Gastrocnemius medialis (tissue), 4 donors: ENCODE measurements at regions of chr11 and their contacts with region 1.

Region 1: DNA sequence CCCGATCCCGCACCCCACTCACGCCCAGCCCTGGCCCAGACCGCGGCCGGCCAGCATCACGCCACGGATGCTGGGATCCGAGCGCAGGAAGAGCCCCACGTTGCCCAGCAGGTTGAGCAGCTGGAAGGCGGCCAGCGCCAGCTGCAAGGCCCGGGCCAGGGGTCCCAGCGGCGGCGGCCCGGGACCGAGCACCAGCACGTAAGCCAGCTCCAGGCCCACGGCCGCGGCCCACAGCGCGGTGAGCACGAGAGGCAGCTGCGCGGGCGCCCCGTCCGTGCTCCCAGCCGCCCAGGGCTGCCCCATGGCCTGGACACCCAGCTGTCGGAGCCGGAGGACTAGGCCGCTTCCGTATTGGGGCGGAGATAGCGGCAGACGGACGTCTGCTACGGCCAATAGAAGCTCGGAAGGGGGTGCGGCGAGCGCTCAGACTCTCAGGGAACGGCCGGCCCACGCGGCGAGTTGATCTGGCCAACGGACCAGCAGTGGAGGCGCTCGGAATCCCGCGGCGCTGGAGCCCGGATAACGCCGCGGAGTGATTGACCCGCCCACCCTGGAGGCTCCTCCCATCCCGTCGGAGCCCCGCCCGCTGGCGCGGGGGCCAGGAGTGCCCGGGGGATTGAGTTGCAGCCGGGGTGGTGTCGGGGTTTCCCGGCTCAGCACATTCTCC is at the start of gene ZDHHC24:
- DNase-seq: peak; percentile 96 to 97
- ATAC-seq: peak; percentile 86 to 92
- H3K4me3 ChIP-seq: peak within 1 kb of the TSS; percentile 70 to 99 (median 80)
- H3K27ac ChIP-seq: peak within 1 kb of the TSS; percentile 79 to 94 (median 91)
- H3K4me1 ChIP-seq: peaks cover 25 to 50% of the 10 kb centered on the region in 2 donors
- H3K27me3 ChIP-seq: no peaks in the 10 kb centered on the region
- CTCF ChIP-seq: no peak
- POLR2A ChIP-seq: peak; percentile 49 to 75
- total RNA-seq, gene ZDHHC24: 7.2 to 13.0 (median 11.2) TPM

Region 2: GRCh38 chr11:66523462-66524010 is 22.3 kb before region 1 on chr11:
- in situ Hi-C with region 1: no loop called
- intact Hi-C with region 1: loop called (anchors 1 kb)
- DNase-seq: no peak
- ATAC-seq: no peak
- H3K4me3 ChIP-seq: no peak overlapping the region
- H3K27ac ChIP-seq: peak overlapping the region in 3 of 4 donors; percentile 69 to 82 (median 75)
- H3K4me1 ChIP-seq: peaks cover 0 to 12% of the 10 kb centered on the region in 2 donors
- H3K27me3 ChIP-seq: no peaks in the 10 kb centered on the region
- CTCF ChIP-seq: no peak
- POLR2A ChIP-seq: no peak